ENCODE measurements at regions of chr3 and their contacts with region 1.

Region 1: GRCh38 chr3:187319699-187320302 is 28.3 kb upstream of the MASP1 start:
- DNase-seq: peak; percentile 90
- ATAC-seq: peak; percentile 96
- H3K4me3 Mint-ChIP-seq: no peak overlapping the region
- H3K27ac Mint-ChIP-seq: no peak overlapping the region
- H3K4me1 Mint-ChIP-seq: peaks cover 27% of the 10 kb centered on the region
- H3K27me3 Mint-ChIP-seq: no peaks in the 10 kb centered on the region
- CTCF ChIP-seq: peak; percentile 99

Region 2: DNA sequence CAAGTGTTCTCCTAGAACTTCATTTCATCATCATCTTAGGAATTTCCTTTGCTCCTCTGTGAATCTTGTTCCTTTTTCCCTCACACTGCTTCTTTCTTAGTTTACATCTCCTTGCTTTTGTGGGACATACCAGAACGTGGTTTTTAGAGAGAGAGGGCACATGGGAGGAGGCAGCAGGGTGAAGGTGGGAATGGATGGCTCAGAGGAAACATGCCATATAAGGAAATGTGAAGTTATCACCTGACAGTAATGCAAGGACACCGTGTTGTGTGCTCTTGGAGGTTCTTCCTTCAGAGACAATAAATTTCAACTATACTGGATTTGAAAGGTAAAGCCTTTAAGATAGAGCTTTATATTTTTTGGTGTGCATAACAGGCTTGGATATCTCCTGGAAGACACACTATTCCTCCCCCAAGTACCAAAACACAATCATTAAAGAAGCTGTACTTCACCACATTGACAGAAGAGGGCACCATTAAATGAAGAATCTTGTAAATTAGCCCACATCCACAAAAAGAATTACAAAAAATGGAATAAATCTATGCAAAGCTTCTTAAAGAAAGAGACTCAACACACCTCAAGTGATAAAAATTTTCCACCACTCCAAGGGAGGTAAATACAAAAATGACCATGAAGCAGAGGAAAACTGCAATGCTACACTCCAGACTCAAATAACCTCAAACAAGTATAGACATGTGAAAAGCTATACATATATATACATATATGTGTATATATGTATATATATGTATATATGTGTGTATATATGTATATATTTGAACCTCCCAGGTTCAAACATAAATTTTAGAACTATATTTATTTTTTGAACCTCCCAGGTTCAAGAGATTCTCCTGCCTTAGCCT is 206.6 kb before region 1 on chr3:
- CTCF ChIA-PET with region 1: interaction called, 13 read pairs
- POLR2A ChIA-PET with region 1: no interaction called
- DNase-seq: no peak
- ATAC-seq: peak; percentile 86
- H3K4me3 Mint-ChIP-seq: no peak overlapping the region
- H3K27ac Mint-ChIP-seq: no peak overlapping the region
- H3K4me1 Mint-ChIP-seq: peaks cover 7% of the 10 kb centered on the region
- H3K27me3 Mint-ChIP-seq: no peaks in the 10 kb centered on the region
- CTCF ChIP-seq: peak; percentile 16

Region 3: DNA sequence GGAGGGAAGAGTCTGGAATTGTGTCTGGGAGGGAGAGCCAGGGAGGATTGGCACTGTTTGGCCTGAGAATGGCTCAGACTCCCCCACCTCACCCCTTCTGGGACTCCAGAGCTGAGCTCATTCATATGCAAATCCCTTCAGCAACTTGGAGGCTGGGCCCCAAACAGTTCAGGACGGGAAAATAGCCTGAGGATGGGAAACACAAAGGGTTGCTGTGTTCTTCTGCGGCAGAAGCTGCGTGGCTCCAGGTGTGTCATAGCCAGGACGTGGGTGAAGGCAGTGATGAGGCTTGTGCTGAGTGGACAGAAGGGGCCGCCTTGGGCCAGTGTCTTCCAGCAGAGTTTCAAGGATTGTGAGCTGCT is 44.8 kb before region 1 on chr3:
- CTCF ChIA-PET with region 1: interaction called, 12 read pairs
- POLR2A ChIA-PET with region 1: no interaction called
- DNase-seq: peak; percentile 77
- ATAC-seq: peak; percentile 99
- H3K4me3 Mint-ChIP-seq: peak overlapping the region; percentile 28; the same call in 1 of the 2 replicates
- H3K27ac Mint-ChIP-seq: peak overlapping the region; percentile 87
- H3K4me1 Mint-ChIP-seq: peaks cover 39% of the 10 kb centered on the region
- H3K27me3 Mint-ChIP-seq: no peaks in the 10 kb centered on the region
- CTCF ChIP-seq: no peak

Region 4: DNA sequence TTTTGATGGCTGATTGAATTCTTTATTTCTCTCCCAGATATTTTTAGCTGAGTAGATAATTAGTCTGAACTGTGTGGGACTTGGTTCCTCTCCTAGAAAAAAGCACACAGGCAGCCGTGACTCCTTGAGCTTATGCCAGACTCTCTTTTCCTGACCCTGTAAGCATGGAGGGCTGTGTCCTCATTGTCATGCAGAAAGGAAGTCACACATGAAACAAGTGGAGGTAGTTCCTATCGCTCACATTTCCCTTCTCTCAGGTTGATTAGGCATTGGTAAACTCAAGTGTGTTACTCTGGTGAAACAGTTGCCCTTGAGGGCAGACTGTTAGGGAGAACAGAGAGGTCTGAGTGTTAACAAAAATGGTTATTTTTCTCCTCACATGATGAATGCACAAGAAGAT is 42.0 kb after region 1 on chr3:
- CTCF ChIA-PET with region 1: interaction called, 26 read pairs
- POLR2A ChIA-PET with region 1: no interaction called
- DNase-seq: peak; percentile 20
- ATAC-seq: peak; percentile 81
- H3K4me3 Mint-ChIP-seq: no peak overlapping the region; the same call in 1 of the 2 replicates
- H3K27ac Mint-ChIP-seq: peak overlapping the region; percentile 36
- H3K4me1 Mint-ChIP-seq: peaks cover 68% of the 10 kb centered on the region
- H3K27me3 Mint-ChIP-seq: peaks cover 12% of the 10 kb centered on the region
- CTCF ChIP-seq: no peak

Region 5: DNA sequence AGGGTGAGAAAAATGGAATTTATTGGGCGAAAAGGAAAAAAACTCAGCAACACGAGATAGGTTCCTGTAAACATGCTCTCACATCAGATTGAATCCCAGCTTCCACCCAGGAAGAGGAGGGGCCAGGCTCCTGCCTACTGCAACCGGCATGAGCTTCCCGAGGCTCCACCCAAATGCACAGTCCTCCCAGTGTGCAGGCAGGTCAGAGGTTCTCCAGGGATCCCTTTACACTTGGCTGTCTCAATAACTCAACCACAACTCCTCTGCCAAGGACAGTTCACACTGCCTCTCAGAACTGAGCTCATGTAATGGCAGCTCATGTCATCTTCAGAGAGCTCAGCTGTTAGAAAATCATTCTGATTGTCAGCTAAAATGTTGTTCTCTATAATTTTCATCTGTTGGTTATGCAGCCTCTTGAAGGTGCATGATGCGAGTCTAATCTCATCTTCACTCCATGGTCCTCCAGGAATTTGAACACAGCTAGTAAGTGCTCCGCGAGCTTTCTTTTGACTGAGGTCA is 273.6 kb after region 1 on chr3:
- CTCF ChIA-PET with region 1: interaction called, 34 read pairs
- POLR2A ChIA-PET with region 1: no interaction called
- DNase-seq: no peak
- ATAC-seq: no peak
- H3K4me3 Mint-ChIP-seq: no peak overlapping the region
- H3K27ac Mint-ChIP-seq: no peak overlapping the region
- H3K4me1 Mint-ChIP-seq: peaks cover 43% of the 10 kb centered on the region
- H3K27me3 Mint-ChIP-seq: peaks cover 5% of the 10 kb centered on the region
- CTCF ChIP-seq: no peak

Region 6: GRCh38 chr3:187669675-187670504 is 350.1 kb after region 1 on chr3 and contains the start of gene SST:
- CTCF ChIA-PET with region 1: interaction called, 433 read pairs
- POLR2A ChIA-PET with region 1: no interaction called
- DNase-seq: peak; percentile 90
- ATAC-seq: peak; percentile 96
- H3K4me3 Mint-ChIP-seq: peak within 1 kb of the TSS; percentile 59
- H3K27ac Mint-ChIP-seq: no peak within 1 kb of the TSS
- H3K4me1 Mint-ChIP-seq: peaks cover 11% of the 10 kb centered on the region
- H3K27me3 Mint-ChIP-seq: peaks cover 81% of the 10 kb centered on the region
- CTCF ChIP-seq: no peak
- total RNA-seq, gene SST: 0.32 to 0.70 TPM in 2 of 3 replicates, not detected in the other

Region 7: DNA sequence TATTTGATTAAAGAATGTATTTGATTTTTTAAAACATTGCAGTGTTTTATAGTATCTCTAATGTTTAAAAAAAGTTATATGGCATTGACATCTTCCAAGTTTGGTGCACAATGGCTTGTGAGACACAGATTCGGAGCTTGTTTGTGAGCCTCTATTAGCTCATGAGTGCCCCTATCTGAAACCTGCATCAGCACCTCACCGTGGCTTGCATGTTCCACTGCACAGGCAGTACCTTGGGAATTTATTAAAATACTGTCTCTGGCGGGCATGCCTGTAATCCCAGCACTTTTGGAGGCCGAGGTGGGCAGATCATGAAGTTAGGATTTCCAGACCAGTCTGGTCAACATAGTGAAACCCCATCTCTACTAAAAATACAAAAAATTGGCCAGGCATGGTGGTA is 389.4 kb after region 1 on chr3:
- CTCF ChIA-PET with region 1: interaction called, 36 read pairs
- POLR2A ChIA-PET with region 1: no interaction called
- DNase-seq: peak; percentile 26
- ATAC-seq: peak; percentile 88
- H3K4me3 Mint-ChIP-seq: no peak overlapping the region
- H3K27ac Mint-ChIP-seq: no peak overlapping the region
- H3K4me1 Mint-ChIP-seq: peaks cover 2% of the 10 kb centered on the region; the same call in 1 of the 2 replicates
- H3K27me3 Mint-ChIP-seq: no peaks in the 10 kb centered on the region
- CTCF ChIP-seq: no peak